Caco-2 (cell line): ENCODE measurements at regions of chr5 and their contacts with region 1.

Region 1: DNA sequence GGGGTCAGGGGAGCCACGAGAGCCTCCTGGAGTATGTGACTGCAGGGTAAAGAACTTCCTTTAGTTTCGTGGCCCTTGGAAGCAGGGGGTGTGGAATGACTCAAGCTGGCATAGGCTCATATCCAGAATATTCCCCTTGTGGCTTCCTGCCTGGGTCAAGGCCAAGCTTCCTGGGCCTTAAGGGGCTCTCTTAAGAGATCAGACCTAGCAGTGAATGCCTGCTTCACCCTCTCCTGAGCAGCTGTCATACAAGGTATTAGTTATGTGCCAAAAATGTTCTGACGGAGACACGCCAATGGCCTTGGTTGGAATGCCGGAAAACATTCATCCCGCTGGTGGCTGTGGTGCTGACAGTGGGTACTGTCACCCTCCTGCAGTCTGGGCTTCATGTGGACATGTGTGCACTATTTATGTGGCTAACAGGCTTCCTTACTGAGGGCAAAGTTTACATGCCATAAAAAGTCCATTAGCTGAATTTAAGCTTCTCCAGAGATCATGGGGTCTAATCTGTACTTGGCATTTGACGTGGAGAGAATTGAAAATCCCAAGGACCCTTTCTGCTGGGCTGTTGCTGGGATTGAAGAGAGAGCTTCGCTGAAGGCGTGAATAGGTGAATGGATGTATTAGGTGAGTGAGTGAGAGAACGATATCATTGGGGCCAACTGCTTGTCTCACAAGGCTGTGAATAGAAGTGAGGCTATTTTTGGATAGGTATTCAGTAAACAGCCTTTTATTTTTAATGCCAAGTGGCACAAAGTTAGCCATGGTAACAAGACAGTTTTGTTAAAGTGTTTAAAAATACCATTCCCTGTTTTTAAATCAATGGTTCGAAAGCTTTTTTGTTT is 156.8 kb downstream of the MACROH2A1 start:
- DNase-seq: peak in 1 of 2 experiments; percentile 12
- H3K4me3 ChIP-seq: no peak overlapping the region
- H3K4me3 Mint-ChIP-seq: no peak overlapping the region
- H3K27ac Mint-ChIP-seq: no peak overlapping the region
- H3K4me1 ChIP-seq: peaks cover 8% of the 10 kb centered on the region; the same call in 1 of the 2 replicates
- H3K4me1 Mint-ChIP-seq: peaks cover 11% of the 10 kb centered on the region
- H3K27me3 ChIP-seq: no peaks in the 10 kb centered on the region
- H3K27me3 Mint-ChIP-seq: no peaks in the 10 kb centered on the region
- CTCF ChIP-seq: no peak

Region 2: GRCh38 chr5:135013947-135014570 is 228.2 kb before region 1 on chr5:
- CTCF ChIA-PET with region 1: no interaction called
- POLR2A ChIA-PET with region 1: no interaction called
- intact Hi-C with region 1: no loop called
- DNase-seq: no peak
- H3K4me3 ChIP-seq: no peak overlapping the region
- H3K4me3 Mint-ChIP-seq: no peak overlapping the region
- H3K27ac Mint-ChIP-seq: no peak overlapping the region
- H3K4me1 ChIP-seq: peaks cover 4% of the 10 kb centered on the region; the same call in 1 of the 2 replicates
- H3K4me1 Mint-ChIP-seq: peaks cover 13% of the 10 kb centered on the region
- H3K27me3 ChIP-seq: no peaks in the 10 kb centered on the region
- H3K27me3 Mint-ChIP-seq: no peaks in the 10 kb centered on the region
- CTCF ChIP-seq: no peak

Region 3: DNA sequence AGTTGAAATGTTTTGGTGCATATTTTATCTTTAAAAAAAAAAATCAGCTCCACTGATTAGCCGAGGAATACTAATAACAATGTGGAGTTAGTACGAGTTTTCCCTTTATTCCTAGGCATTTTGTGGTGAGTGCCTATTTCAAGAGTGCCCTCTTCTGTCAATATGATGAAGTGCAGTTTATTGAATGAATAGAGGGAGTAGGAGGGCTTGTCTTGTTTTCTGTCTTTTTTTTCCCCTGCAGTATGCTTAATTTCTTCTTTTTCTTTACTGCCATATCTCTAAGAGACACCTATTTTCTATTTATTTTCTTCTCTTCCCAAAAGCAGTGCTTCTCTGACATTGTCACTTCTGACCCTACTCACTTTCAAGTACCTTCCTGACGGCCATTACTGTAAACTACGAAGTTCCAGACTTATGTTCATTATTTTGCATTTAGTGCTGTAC is 38.6 kb before region 1 on chr5:
- CTCF ChIA-PET with region 1: no interaction called
- POLR2A ChIA-PET with region 1: no interaction called
- intact Hi-C with region 1: loop called (anchors 1 kb)
- DNase-seq: no peak
- H3K4me3 ChIP-seq: no peak overlapping the region
- H3K4me3 Mint-ChIP-seq: no peak overlapping the region
- H3K27ac Mint-ChIP-seq: no peak overlapping the region
- H3K4me1 ChIP-seq: no peaks in the 10 kb centered on the region
- H3K4me1 Mint-ChIP-seq: no peaks in the 10 kb centered on the region
- H3K27me3 ChIP-seq: no peaks in the 10 kb centered on the region
- H3K27me3 Mint-ChIP-seq: no peaks in the 10 kb centered on the region
- CTCF ChIP-seq: peak; percentile 28 to 29

Region 4: GRCh38 chr5:135217669-135218485 is 24.4 kb before region 1 on chr5:
- CTCF ChIA-PET with region 1: no interaction called
- POLR2A ChIA-PET with region 1: no interaction called
- intact Hi-C with region 1: no loop called
- DNase-seq: peak; percentile 21 to 30
- H3K4me3 ChIP-seq: no peak overlapping the region
- H3K4me3 Mint-ChIP-seq: no peak overlapping the region
- H3K27ac Mint-ChIP-seq: no peak overlapping the region
- H3K4me1 ChIP-seq: no peaks in the 10 kb centered on the region
- H3K4me1 Mint-ChIP-seq: peaks cover 6% of the 10 kb centered on the region
- H3K27me3 ChIP-seq: no peaks in the 10 kb centered on the region
- H3K27me3 Mint-ChIP-seq: no peaks in the 10 kb centered on the region
- CTCF ChIP-seq: no peak

Region 5: GRCh38 chr5:135615581-135616260 is 373.5 kb after region 1 on chr5:
- CTCF ChIA-PET with region 1: no interaction called
- POLR2A ChIA-PET with region 1: no interaction called
- intact Hi-C with region 1: no loop called
- DNase-seq: no peak
- H3K4me3 ChIP-seq: no peak overlapping the region
- H3K4me3 Mint-ChIP-seq: no peak overlapping the region
- H3K27ac Mint-ChIP-seq: no peak overlapping the region
- H3K4me1 ChIP-seq: 0 out of 2 replicates have a peak, but pooled peaks cover 3% of the 10 kb centered on the region
- H3K4me1 Mint-ChIP-seq: no peaks in the 10 kb centered on the region
- H3K27me3 ChIP-seq: no peaks in the 10 kb centered on the region
- H3K27me3 Mint-ChIP-seq: no peaks in the 10 kb centered on the region
- CTCF ChIP-seq: no peak